ENCODE measurements at regions of chr6 and their contacts with region 1.

Region 1: GRCh38 chr6:89352278-89353117 is at the start of gene UBE2J1:
- DNase-seq: peak; percentile 86
- ATAC-seq: peak; percentile 88
- H3K4me3 Mint-ChIP-seq: peak within 1 kb of the TSS; percentile 95
- H3K27ac Mint-ChIP-seq: peak within 1 kb of the TSS; percentile 94
- H3K4me1 Mint-ChIP-seq: peaks cover 65% of the 10 kb centered on the region
- H3K27me3 Mint-ChIP-seq: no peaks in the 10 kb centered on the region
- total RNA-seq, gene UBE2J1: 26.1 to 31.2 TPM

Region 2: DNA sequence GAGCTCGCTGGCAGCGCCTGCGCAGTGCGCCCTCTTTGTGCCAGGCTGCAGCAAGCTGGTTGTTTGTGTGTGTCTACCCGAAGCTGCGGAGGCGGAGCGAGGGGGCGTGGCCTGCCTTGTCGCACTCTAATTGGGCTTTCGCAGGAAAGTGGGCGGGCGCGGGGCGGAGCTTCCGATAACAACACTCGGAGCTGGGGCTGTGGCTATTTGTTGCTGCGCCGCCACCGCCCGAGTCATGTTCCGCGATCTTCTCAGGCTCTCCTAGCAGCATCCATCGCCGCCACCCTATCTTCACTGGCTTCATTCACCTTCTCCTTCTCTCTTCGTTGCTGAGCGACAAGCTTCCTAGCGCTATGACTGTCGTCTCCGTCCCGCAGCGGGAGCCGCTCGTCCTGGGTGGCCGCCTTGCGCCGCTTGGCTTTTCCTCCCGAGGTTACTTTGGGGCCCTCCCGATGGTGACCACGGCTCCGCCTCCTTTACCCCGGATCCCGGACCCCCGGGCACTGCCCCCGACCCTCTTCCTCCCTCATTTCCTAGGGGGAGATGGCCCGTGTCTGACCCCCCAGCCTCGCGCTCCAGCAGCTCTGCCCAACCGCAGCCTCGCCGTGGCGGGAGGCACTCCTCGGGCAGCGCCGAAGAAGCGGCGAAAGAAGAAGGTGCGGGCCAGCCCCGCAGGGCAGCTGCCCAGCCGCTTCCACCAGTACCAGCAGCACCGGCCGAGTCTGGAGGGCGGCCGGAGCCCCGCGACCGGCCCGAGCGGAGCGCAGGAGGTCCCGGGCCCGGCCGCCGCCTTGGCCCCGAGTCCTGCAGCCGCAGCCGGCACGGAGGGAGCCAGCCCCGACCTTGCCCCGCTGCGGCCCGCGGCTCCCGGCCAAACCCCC is 271.7 kb before region 1 on chr6 and contains the start of gene PNRC1:
- CTCF ChIA-PET with region 1: interaction called, 10 read pairs
- DNase-seq: peak; percentile 100
- ATAC-seq: peak; percentile 74
- H3K4me3 Mint-ChIP-seq: peak within 1 kb of the TSS; percentile 97
- H3K27ac Mint-ChIP-seq: peak within 1 kb of the TSS; percentile 99
- H3K4me1 Mint-ChIP-seq: peaks cover 26% of the 10 kb centered on the region
- H3K27me3 Mint-ChIP-seq: no peaks in the 10 kb centered on the region
- total RNA-seq, gene PNRC1: 66.9 to 71.8 TPM

Region 3: GRCh38 chr6:89297695-89298351 is 54.7 kb before region 1 on chr6:
- CTCF ChIA-PET with region 1: interaction called, 12 read pairs
- DNase-seq: peak; percentile 87
- ATAC-seq: peak; percentile 73
- H3K4me3 Mint-ChIP-seq: peak overlapping the region; percentile 62
- H3K27ac Mint-ChIP-seq: peak overlapping the region; percentile 91
- H3K4me1 Mint-ChIP-seq: peaks cover 26% of the 10 kb centered on the region
- H3K27me3 Mint-ChIP-seq: no peaks in the 10 kb centered on the region

Region 4: GRCh38 chr6:89400912-89401399 is 48.5 kb after region 1 on chr6:
- CTCF ChIA-PET with region 1: no interaction called
- DNase-seq: no peak
- ATAC-seq: no peak
- H3K4me3 Mint-ChIP-seq: no peak overlapping the region
- H3K27ac Mint-ChIP-seq: no peak overlapping the region
- H3K4me1 Mint-ChIP-seq: peaks cover 3% of the 10 kb centered on the region
- H3K27me3 Mint-ChIP-seq: no peaks in the 10 kb centered on the region

Measured in activated CD8-positive, alpha-beta memory T cell treated with anti-CD3 and anti-CD28 coated beads, Interleukin-2, amount 10 ng/mL, durations not matched to agents 7 days and 5 days (primary cell).